Breast epithelium (tissue), 4 donors: ENCODE measurements at regions of chr9 and their contacts with region 1.

Region 1: DNA sequence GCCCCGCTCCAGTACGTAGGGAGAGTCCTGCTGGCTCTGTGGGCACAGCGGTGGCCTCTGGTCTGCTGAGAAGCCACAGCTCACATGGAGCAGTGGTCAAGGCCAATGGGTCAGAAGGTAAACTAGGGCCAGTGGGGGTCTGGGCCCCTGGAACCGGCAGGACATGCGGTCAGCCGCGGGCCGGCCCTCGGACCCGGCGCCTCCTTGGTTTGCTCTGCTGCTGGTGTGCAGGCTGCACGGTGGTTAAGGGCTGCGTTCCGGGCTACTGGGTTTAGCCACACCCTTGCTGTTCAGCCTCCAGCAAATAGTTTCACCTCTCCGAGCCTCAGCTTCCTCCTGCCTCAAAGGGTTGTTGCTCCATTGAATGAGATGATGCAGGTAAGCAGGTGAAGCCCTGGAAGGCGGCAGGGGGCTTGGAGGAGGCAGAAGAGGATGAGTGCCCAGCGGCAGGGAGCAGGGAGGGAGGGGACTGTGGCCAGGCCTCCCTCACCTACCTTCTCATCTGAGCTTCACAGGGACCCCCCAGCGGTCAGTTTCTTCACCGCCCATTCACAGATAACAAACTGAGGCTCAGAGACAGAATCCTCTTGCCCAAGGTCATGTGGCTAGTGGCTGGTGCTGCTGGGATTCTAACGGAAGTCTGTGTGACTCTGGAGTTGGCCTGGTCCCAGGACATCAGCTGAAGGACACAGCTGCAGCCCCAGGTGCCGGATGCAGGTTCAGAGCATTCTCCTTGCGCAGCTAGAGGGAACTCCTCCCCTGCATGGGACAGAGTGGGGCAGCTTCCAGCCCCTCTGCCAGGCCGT is 3.7 kb upstream of the COL5A1 start:
- DNase-seq: no peak
- H3K4me3 ChIP-seq: no peak overlapping the region
- H3K27ac ChIP-seq: no peak overlapping the region
- H3K4me1 ChIP-seq: peaks cover 0 to 7% of the 10 kb centered on the region in 2 donors
- H3K27me3 ChIP-seq: peaks cover 0 to 4% of the 10 kb centered on the region in 2 donors
- CTCF ChIP-seq: no peak
- POLR2A ChIP-seq: no peak

Region 2: GRCh38 chr9:134163353-134164196 is 474.3 kb before region 1 on chr9:
- intact Hi-C with region 1: no loop called
- DNase-seq: no peak
- H3K4me3 ChIP-seq: no peak overlapping the region
- H3K27ac ChIP-seq: peak overlapping the region in 1 of 2 donors; percentile 76
- H3K4me1 ChIP-seq: no peaks in the 10 kb centered on the region
- H3K27me3 ChIP-seq: no peaks in the 10 kb centered on the region
- CTCF ChIP-seq: peak in 2 of 3 donors; percentile 20 to 51
- POLR2A ChIP-seq: no peak

Region 3: GRCh38 chr9:134607971-134608370 is 29.9 kb before region 1 on chr9:
- intact Hi-C with region 1: loop called (anchors 1 kb)
- DNase-seq: no peak
- H3K4me3 ChIP-seq: no peak overlapping the region
- H3K27ac ChIP-seq: no peak overlapping the region
- H3K4me1 ChIP-seq: no peaks in the 10 kb centered on the region
- H3K27me3 ChIP-seq: no peaks in the 10 kb centered on the region
- CTCF ChIP-seq: no peak
- POLR2A ChIP-seq: no peak